ENCODE measurements at regions of chr10 and their contacts with region 1.

Region 1: DNA sequence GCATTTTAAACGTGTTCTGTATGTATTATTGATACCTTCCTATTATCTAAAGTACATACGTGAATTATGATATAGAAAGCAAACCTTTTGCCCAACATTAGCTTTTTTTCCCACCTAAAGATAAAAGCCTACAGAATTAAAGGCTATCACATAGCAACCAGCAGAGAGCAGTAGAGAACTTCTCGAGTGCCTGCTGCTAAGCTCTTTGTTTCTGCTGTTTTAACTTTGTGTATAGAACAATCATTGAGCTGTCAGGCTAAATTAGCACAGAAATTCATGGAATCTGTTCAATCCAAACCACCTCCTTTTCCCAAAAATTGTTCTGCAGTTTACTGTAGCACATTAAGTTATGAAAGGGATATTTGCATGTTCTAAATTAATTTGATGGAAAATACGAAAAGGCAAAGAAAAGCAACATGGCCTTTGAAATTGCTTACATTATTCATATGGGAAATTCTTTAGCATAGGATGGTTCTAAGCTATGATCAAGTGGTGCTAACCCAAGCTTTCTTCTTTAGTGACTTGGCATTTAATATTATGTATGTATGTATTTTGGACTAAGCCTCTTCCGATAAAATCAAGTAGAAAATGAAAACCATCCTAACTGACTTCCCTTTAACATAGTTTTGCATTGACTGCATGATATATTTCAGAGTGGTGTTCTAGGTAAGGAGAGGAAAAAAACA is 1288.5 kb downstream of the GATA3 start:
- DNase-seq: peak; percentile 59
- H3K4me3 Mint-ChIP-seq: no peak overlapping the region
- H3K27ac Mint-ChIP-seq: no peak overlapping the region
- H3K4me1 Mint-ChIP-seq: no peaks in the 10 kb centered on the region
- H3K27me3 Mint-ChIP-seq: no peaks in the 10 kb centered on the region
- CTCF ChIP-seq: peak; percentile 67

Region 2: DNA sequence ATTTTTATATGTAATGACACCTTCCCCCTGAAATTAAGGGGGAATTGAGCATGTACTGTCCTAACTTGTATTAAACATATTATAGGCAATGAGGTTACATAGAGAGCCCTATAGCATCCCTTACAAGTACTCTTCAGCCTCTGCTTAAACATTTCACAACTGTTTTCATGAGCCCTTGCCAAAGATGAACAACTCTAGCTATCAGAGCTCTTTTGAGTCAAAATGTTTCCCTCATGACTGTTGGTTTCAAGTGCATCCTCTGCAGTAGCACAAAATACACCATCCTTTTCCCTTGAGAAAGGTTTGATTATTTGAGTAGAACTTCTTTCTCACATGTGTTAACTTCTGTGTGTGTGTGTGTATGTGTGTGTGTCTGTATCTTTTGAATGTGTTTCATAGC is 517.0 kb after region 1 on chr10:
- CTCF ChIA-PET with region 1: interaction called, 3 read pairs
- POLR2A ChIA-PET with region 1: no interaction called
- intact Hi-C with region 1: loop called (anchors 5 kb)
- DNase-seq: no peak
- H3K4me3 Mint-ChIP-seq: no peak overlapping the region
- H3K27ac Mint-ChIP-seq: no peak overlapping the region
- H3K4me1 Mint-ChIP-seq: peaks cover 6% of the 10 kb centered on the region
- H3K27me3 Mint-ChIP-seq: no peaks in the 10 kb centered on the region
- CTCF ChIP-seq: no peak

Measured in MCF 10A (cell line).